Cardiac septum (tissue), 1 donor: ENCODE measurements at regions of chr4 and their contacts with region 1.

Region 1: DNA sequence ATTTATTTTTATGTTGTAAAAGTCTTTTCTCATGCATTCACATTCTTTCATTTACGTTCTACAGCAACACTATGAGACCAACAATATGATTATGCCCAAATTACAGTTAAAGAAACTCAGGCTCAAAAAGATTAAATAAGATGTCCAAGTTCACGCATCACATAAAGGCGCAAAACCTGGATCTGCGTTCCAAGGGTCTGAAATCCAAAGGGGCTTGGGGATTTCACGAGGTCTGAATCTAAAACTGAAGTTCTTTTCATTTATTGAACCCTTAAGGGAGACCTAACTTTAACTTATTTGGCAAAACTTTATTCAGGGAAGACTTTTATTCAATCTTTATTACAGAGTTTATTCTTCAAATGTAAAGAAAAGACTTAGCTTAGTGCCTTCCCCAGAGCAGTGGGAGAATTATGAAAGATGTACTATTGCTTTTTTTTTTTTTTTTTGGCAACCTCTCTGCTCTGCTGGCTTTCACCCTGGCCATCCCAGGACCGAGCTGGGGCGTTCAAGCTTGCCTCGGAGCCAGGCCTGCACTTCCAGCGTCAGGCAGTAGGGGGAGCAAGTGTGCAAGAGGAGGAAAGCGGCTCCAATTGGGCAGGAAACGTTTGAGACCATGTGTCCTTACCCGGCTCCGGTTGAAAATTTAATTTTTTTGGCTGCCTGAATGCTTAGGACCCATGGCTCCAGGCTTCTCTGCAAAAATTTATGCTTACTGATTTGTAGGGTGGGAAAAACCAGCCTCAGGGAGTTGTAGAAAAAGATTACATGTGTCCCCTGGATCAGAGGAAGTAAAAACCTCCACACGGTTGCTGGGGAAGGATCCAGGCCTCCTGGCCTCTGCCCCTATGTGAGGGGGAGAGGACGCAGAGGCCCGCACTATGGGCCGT is 344.3 kb upstream of the KLF3 start:
- DNase-seq: peak; percentile 96

Region 2: GRCh38 chr4:38062088-38062893 is 257.4 kb before region 1 on chr4:
- intact Hi-C with region 1: loop called (anchors 2 kb)
- DNase-seq: no peak

Region 3: GRCh38 chr4:38366456-38366855 is 46.8 kb after region 1 on chr4:
- intact Hi-C with region 1: no loop called
- DNase-seq: no peak

Region 4: DNA sequence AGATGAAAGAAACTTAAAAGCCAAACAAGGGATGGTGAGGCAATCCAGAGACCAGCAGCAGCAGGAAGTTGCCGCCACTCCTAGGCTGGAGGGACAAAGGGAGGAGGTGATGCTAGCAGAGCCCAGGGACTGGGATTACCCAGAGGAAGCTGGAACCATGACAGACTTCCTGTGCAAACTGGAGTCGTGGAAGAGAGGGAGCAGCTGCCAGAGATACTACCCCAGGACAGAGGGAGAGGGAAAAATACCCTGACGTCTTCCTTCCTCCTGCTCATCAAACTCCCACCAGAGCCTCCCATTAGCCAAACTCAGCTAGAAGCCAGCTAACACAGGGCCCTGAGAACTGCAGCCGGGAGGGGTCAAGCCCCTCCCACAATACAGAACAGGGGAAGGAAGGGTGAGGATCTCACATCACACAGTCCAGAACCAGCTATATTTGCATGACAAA is 243.1 kb after region 1 on chr4:
- intact Hi-C with region 1: loop called (anchors 5 kb)
- DNase-seq: peak; percentile 79

Region 5: DNA sequence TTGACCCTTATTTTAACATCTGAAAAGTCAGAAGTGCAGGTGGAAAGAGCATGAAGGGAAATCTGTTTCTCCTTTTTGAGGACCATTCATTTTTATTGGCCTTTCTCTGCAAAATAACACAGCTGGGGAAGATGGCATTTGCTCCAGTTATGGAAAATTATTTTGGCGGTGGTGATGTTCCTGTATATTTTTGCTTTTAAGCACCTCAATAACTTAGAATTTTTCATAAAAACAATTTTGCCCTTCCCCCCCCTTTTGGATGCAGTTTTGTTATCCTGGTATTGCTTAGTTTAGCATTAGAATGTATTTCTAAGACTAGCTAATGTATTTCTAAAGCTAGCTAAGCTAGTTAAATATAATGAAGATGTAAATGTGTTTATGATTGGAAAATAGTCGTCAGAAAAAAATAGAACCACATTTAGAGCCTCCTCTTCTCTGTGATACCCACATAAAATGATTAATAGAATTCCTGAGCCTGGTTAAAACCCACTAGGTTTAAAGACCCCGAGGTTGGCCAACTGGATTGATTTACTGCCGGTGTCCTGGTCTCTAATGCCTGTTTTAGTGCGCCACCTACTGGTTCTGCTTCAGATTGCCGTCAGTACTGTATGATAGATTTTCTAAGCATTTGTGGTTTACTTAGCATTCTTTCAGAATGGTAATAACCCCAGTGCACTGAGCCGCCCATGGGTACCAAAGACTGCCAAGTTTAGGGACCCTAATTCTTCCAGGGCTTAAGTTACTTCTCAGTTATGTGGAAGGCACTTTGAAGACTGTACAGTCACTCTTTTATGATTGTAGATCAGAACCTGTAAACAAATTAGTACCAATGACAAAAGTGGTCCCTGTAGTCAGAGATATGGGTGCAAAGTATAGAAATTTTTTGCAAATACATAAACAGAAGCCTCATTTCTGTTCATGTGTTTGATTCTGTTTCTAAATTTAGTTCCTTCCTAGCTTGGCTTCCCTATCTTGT is 355.7 kb after region 1 on chr4:
- intact Hi-C with region 1: loop called (anchors 1 kb)
- DNase-seq: no peak